Left colon (tissue), 2 donors: ENCODE measurements at regions of chr11 and their contacts with region 1.

Region 1: DNA sequence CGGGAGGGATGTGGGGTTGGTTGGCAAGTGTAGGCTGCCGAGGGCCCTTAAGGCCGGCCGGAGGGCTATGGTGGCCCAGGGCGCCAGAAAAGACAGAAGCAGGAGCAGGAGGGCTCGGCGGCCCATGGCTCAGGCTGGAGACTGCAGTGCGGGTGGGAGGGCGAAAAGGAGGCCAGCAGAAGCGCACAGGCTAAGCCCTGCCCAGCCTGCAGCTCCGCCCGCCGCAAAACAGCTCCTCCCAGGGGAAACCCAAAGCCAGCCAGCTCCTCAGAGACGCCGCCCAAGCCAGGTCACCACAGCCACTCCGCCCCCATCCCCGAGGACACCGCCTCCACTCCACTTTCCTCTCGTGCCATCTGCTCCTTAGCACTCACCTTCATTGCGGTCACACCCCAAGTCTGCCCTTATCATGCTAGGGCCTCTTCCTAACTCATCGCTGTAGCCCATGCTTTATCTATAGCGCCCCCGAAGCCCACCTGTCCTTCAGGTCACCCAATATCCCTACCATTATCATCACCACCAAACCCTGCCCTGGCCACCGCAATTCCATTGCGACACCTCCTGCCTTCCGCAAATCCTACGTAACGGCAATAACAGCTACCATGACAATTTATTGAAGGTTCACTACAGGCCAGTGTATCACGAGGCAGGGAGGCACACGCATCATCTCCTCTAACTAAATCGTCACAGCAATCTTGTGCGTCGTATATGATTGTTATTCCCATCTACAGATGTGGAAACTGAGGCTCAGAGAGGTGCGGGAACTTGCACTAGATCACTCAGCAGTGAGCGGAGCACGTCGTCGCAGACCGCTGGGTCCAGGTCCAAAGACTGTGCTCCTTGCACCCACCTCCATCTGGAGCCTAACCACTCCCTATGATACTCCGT is at the start of gene PRCP:
- DNase-seq: peak; percentile 96 to 99
- ATAC-seq: peak; percentile 89
- total RNA-seq, gene PRCP: 27.4 to 47.9 TPM

Region 2: GRCh38 chr11:83071567-83072349 is 171.2 kb after region 1 on chr11 and contains the start of gene RAB30:
- intact Hi-C with region 1: loop called in 1 of 2 experiments (anchors 10 kb)
- DNase-seq: peak; percentile 93 to 99
- ATAC-seq: peak; percentile 97
- total RNA-seq, gene RAB30: 5.9 to 24.3 TPM

Region 3: DNA sequence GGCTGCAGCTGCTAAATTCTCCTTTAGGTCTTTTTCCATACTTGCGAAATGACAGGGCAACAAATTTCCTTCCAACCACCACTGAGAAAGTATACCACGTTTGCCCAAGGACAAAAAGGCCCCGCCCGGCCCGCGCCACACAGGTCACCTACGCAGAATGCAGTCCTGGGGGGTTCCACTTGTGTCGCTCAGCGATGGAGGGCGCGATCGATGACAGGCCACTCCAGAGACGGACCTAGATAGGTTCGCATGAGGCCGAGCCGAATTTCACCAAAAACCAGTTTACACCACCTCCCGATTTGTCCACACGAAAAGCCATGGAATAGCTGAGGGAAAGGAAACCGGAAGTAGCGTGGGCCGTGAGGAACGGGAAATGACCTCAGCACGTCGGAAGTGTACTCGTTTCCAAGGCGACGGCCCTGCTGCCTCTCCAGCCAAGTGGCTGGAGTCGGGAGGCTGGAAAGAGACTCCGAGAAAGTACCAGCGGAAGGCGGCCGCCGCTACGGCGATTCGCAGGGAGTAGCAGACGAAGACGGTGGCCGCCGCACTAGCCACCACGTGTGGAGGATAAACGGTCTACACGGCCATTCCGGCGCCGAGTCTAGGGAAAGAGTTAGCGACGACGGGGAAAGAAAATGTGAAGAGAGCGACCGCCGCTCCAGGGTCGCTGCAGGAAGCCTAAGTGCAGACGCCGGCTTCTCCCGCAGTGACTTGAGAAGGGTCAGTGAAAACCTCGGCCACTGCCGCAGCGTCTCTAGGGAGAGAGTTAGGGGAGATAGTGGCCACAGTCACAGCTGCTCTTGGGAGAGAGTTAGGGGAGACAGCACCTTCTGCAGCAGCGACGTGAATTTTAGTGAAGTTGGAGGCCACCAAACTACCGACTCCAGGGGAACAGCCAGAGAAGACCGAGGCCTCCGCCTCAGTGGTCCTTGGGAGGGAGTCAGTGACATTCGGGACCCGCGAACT is 293.1 kb after region 1 on chr11 and contains the start of gene ANKRD42:
- intact Hi-C with region 1: loop called in 1 of 2 experiments (anchors 10 kb)
- DNase-seq: peak; percentile 93 to 95
- ATAC-seq: peak; percentile 94
- total RNA-seq, gene ANKRD42: 7.2 to 8.6 TPM

Region 4: GRCh38 chr11:83249972-83250593 is 349.6 kb after region 1 on chr11:
- intact Hi-C with region 1: loop called in 1 of 2 experiments (anchors 10 kb)
- DNase-seq: no peak
- ATAC-seq: peak; percentile 74